ENCODE measurements at regions of chr15 and their contacts with region 1.

Region 1: GRCh38 chr15:94324117-94324826 is 92.9 kb downstream of the MCTP2 start:
- DNase-seq: peak; percentile 68
- H3K4me3 ChIP-seq: peak overlapping the region in 1 of 2 experiments; percentile 38; a peak in 1 of 4 replicates
- H3K27ac ChIP-seq: peak overlapping the region in 1 of 2 experiments; percentile 56; a peak in 1 of 4 replicates
- H3K4me1 ChIP-seq: peaks cover 0 to 3% of the 10 kb centered on the region in 2 experiments; a peak in 2 of 4 replicates
- H3K27me3 ChIP-seq: no peaks in the 10 kb centered on the region
- CTCF ChIP-seq: peak; percentile 94
- EP300 ChIP-seq: no peak
- RAD21 ChIP-seq: peak; percentile 98

Region 2: DNA sequence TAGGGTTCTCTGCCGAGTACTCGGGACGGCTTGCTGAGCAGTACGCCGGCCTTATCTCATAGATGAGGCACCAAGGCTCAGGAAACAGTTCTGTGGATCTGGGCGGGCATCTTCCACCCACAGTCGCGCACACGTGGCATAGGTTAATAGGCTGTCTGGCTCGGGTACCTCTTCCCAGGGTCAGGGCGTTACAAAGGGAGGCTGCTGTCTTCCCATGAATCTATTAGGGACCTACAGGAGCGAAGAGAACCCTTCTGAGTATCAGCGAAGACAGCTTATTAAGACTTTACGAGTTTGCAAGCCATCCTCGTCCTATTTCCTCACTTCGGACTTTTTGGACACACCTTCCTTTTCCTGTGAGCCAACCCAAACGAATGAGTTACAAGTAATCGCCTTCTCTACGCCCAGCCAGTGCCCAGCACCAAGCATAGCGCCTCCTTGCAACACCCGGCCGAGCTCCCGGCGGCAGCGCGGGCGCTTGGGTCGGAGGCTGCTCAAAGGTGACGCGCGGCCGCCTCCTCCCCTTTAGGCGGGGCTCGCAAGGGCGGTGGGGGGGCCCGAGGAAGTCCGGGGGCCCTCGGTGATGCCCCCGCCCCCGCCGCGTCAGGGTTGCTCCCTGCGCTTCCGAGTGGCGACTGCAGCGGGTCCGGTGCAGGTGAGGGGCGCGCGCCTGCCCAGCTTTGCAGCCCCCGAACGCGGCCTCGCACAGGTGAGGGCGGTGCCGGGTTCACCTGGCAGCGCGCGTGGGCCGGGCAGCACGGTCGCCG is 93.1 kb before region 1 on chr15 and contains the start of gene MCTP2:
- CTCF ChIA-PET with region 1: interaction called, 12 read pairs
- POLR2A ChIA-PET with region 1: no interaction called
- DNase-seq: peak; percentile 85
- H3K4me3 ChIP-seq: peak within 1 kb of the TSS; percentile 52 to 53
- H3K27ac ChIP-seq: peak within 1 kb of the TSS in 1 of 2 experiments; percentile 68; a peak in 2 of 4 replicates
- H3K4me1 ChIP-seq: peaks cover 0 to 5% of the 10 kb centered on the region in 2 experiments; a peak in 2 of 4 replicates
- H3K27me3 ChIP-seq: no peaks in the 10 kb centered on the region
- CTCF ChIP-seq: no peak
- EP300 ChIP-seq: no peak
- RAD21 ChIP-seq: no peak
- polyA plus RNA-seq, gene MCTP2: 0.26 and 0.52 TPM in 2 replicates

Region 3: DNA sequence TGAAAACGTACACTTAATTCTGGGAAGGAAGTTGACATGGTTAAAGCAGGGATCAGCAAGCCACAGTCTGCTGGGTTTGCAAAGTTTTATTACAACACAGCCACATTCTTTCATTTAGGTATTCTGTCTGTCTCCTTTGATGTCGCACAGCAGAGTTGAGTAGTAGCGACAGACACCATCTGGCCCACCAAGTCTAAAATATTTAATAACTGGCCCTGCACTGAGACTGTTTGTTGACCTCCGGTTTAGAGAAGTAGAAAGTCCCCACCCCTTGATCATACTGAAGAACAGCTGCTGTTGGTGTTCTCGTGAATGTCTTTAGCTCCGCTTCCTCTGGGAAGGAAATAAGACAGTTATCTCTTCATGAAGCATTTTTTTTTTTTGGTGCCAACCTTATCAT is 26.7 kb before region 1 on chr15:
- CTCF ChIA-PET with region 1: interaction called, 12 read pairs
- POLR2A ChIA-PET with region 1: no interaction called
- DNase-seq: no peak
- H3K4me3 ChIP-seq: no peak overlapping the region
- H3K27ac ChIP-seq: no peak overlapping the region
- H3K4me1 ChIP-seq: no peaks in the 10 kb centered on the region
- H3K27me3 ChIP-seq: no peaks in the 10 kb centered on the region
- CTCF ChIP-seq: no peak
- EP300 ChIP-seq: no peak
- RAD21 ChIP-seq: no peak

Region 4: DNA sequence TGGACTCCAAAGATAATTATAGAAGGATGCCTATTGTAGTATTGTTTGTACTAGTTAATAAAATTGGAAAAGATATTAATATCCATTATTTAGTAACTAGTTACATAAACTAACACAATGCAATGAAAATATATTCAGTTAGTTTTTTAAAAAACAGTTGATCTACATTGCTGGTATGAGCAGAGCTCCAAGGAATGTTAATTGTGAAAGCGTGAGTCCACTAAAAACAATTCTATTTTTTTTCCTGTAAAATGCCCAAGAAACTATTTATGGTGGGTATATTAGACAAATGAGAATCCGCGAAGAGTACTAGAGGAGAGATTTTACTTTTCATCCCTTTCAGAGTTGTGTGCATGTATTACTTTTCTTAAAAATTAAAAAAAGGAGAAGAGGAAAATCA is 11.3 kb after region 1 on chr15:
- CTCF ChIA-PET with region 1: interaction called, 33 read pairs
- POLR2A ChIA-PET with region 1: no interaction called
- DNase-seq: no peak
- H3K4me3 ChIP-seq: no peak overlapping the region
- H3K27ac ChIP-seq: no peak overlapping the region
- H3K4me1 ChIP-seq: no peaks in the 10 kb centered on the region; a peak in 1 of 4 replicates
- H3K27me3 ChIP-seq: no peaks in the 10 kb centered on the region
- CTCF ChIP-seq: no peak
- EP300 ChIP-seq: no peak
- RAD21 ChIP-seq: no peak

Region 5: DNA sequence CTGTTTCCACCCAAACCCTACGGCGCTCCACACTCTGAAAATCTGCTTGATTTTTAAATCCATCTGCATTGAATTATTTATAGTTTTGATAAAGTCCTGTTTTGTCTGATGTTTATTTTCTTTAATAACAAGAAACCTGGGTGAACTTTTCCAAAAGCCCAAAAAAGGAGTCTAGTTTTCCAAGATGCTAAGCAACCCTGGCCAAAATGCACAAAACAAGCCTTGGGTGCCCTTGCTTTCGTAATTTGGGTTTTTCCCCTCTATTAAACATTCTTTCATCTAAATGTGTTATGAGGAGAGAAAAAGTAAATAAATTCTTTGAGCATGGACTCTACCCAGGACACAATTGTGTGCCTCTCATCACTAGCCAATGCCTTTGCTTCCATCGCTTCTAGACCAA is 375.9 kb after region 1 on chr15:
- CTCF ChIA-PET with region 1: no interaction called
- POLR2A ChIA-PET with region 1: no interaction called
- DNase-seq: no peak
- H3K4me3 ChIP-seq: no peak overlapping the region
- H3K27ac ChIP-seq: no peak overlapping the region
- H3K4me1 ChIP-seq: no peaks in the 10 kb centered on the region
- H3K27me3 ChIP-seq: no peaks in the 10 kb centered on the region
- CTCF ChIP-seq: no peak
- EP300 ChIP-seq: no peak
- RAD21 ChIP-seq: no peak